ENCODE measurements at regions of chr5 and their contacts with region 1.

Region 1: GRCh38 chr5:157312492-157312891 is 46.6 kb downstream of the CYFIP2 start:
- DNase-seq: peak; percentile 43 to 83
- H3K4me3 ChIP-seq: no peak overlapping the region
- H3K27ac ChIP-seq: no peak overlapping the region
- H3K4me1 ChIP-seq: no peaks in the 10 kb centered on the region
- H3K27me3 ChIP-seq: peaks cover 0 to 4% (median 0%) of the 10 kb centered on the region in 3 donors
- CTCF ChIP-seq: peak in 5 of 7 experiments; percentile 22 to 54 (median 35)
- EP300 ChIP-seq: no peak
- POLR2A ChIP-seq: no peak

Region 2: GRCh38 chr5:157253547-157253946 is 58.9 kb before region 1 on chr5:
- intact Hi-C with region 1: loop called (anchors 5 kb)
- DNase-seq: peak; percentile 47 to 70
- H3K4me3 ChIP-seq: no peak overlapping the region
- H3K27ac ChIP-seq: no peak overlapping the region
- H3K4me1 ChIP-seq: peaks cover 0 to 15% (median 3%) of the 10 kb centered on the region in 4 donors
- H3K27me3 ChIP-seq: no peaks in the 10 kb centered on the region
- CTCF ChIP-seq: peak in 5 of 7 experiments; percentile 69 to 79 (median 75)
- EP300 ChIP-seq: no peak
- POLR2A ChIP-seq: no peak

Region 3: DNA sequence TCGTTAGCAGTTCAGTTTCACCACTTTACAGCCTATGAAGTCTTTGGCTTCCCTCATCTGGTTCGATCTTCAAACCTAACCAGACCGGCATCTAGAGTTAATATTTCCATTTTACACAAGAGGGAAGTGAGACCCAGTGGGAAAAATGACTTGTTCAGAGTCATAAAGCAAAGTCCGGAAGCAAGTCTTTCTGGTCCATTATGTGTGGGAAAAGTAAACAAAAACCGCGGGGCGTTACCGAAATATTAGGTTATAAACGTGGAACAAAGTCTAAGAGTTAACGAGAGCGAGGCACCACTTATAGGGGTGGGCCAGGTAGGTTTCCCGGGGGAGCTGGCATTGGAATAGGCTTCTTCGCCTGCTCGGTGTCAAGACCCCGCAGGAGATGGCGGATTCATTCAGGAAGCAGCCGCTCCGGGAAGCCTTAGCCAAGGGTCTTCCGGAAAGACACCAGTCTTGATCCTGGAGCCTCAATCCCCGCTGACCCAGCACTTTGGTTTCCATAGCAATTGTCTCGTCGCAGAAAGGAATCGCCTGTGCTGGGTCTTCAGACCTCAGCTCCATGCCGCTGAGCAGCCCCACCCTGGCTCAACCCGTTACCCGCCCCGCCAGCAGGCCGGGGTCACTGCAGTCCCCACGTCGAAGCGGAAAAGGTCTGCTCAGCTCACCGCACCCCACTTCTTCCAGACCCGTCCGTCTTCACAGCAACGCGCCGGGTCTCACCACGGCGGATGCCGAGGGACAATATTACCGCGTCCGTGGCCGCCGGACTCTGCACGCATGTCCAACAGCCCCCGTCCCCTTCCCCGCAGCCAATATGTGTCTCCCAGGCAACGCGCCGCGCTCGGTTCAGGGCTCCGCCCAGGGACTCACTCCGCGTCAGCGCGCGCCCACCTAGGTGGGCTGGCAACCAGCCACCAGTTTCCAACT is 358.4 kb after region 1 on chr5 and contains the start of gene C5orf52:
- intact Hi-C with region 1: no loop called
- DNase-seq: peak in 1 of 2 donors; percentile 84
- H3K4me3 ChIP-seq: peak within 1 kb of the TSS; percentile 56 to 68 (median 62)
- H3K27ac ChIP-seq: peak within 1 kb of the TSS in 1 of 5 donors; percentile 22
- H3K4me1 ChIP-seq: peaks cover 14 to 18% (median 16%) of the 10 kb centered on the region in 4 donors
- H3K27me3 ChIP-seq: peaks cover 0 to 28% (median 9%) of the 10 kb centered on the region in 3 donors
- CTCF ChIP-seq: no peak
- EP300 ChIP-seq: no peak
- POLR2A ChIP-seq: no peak
- total RNA-seq, gene C5orf52: not detected

Region 4: DNA sequence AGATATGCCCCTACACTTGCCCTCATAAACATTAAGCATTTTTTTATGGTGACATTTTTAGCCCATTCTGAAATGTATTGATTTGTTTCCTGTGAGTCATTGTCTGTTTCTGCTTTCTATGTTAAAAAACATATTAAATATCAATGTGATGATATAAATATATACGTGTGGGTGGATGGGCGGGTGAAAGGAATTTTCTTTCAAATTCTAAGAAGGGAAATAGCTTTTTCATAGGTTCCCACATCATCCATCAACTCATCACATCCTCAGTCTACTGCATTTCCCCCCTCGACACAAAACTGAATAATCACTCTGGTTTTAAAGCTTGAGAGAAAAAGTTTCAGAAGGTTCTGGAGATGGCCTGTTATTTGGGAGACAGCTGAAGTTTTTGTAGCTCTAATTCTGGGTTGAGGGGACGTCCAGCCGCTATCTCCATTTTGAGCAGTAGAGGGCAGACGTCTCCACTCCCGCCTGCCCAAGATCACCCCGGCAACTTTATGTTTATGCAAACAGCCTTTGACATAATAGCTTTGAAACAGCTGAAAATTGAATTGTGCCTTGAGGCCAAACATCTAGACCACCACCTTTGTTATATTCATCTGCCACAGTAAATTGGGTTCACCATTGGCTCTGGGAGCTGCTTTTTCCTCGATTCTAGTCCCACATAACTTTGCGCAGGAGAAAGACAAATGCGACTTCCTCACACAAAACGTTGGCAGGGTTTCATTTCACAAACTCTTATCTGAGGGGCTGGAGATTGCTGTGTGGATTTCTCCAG is 762.7 kb after region 1 on chr5:
- intact Hi-C with region 1: no loop called
- DNase-seq: peak; percentile 44 to 94
- H3K4me3 ChIP-seq: peak overlapping the region; percentile 22 to 32 (median 28)
- H3K27ac ChIP-seq: peak overlapping the region in 1 of 5 donors; percentile 61
- H3K4me1 ChIP-seq: peaks cover 0 to 13% (median 7%) of the 10 kb centered on the region in 4 donors
- H3K27me3 ChIP-seq: peaks cover 0 to 3% (median 0%) of the 10 kb centered on the region in 3 donors
- CTCF ChIP-seq: peak in 5 of 7 experiments; percentile 30 to 77 (median 61)
- EP300 ChIP-seq: no peak
- POLR2A ChIP-seq: no peak